Head of caudate nucleus (tissue), 42 donors: ENCODE measurements at regions of chr16 and their contacts with region 1.

Region 1: DNA sequence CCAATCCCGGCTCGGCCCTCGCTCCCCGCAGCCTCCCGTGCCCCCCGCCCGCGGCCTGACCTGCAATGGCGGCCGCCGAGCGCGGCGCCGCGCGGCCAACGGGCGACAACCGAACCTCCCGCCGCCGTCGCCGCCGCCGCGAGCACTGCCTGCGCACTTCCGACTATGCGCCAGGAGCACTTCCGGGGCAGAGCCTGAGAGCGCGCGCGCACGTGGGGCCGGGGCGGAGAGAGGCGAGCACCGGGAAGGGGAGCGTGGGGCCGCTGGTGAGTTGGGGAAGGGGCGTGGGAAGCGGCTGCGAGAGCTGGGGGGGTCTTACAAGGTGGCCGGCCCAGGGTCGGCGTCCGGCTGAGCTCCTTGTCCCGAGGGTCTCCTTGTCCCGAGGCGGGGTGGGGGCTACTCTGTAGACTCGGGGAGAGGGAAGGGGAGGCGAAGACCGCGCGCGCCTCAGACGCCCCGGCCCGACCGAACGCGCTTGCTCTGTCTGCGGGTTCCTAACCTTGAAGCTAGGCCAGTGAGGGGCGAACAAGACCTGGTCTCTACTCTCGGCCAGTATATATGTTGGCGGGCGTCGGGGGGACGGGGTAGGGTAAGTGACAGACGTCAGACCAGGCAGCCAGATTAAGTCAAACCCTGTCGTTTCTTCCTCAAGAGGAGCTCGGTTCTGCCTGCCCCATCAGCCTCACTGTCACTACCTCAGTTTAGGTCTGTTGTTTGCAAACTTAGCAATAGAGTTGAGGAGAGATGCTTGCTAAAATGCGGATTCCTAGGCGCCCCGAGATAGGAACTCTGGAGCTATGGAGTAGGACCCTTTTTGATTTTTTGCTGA is at the starts of genes CHTF8 and UTP4:
- DNase-seq: peak; percentile 70 to 95 (median 89)

Region 2: GRCh38 chr16:68528686-68529379 is 603.8 kb before region 1 on chr16:
- intact Hi-C with region 1: loop called (anchors 10 kb)
- DNase-seq: peak; percentile 84 to 96 (median 91)

Region 3: GRCh38 chr16:68851601-68852000 is 281.0 kb before region 1 on chr16:
- intact Hi-C with region 1: no loop called
- DNase-seq: no peak

Region 4: DNA sequence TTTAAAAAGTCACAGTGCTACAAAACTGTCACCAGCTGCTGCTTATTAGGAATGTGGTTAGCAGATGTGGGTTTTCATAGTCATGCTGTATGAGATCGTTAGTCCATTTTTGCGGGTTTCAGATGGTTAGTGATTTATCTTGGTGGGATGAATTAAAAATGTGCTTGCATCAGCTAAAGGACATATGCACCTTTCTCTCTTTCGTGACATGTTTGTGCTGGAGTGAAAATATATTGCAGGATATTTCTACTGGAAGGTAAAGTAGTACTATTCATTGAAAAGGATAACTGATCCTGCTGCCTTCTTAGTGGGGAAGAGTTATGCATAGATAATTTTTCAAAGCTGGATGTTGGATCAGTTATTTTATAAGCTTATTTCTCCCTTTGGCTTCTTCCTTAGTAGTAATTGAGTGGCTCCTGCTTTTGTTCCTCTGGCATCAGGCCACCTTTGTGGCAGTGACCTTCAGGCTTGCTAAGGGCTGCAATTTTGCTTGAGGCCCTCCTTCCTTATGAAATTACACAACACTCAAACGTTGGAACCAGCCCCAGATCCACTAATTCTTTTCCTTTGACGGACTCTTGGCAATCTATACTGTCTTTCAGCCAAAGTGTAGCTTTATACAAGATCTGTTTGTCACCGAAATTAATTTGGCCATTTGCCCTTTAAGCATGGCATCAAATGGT is 46.8 kb after region 1 on chr16:
- intact Hi-C with region 1: no loop called
- DNase-seq: peak in 8 of 42 donors; percentile 5 to 63 (median 26)